OCI-LY7 (cell line): ENCODE measurements at regions of chr15 and their contacts with region 1.

Region 1: DNA sequence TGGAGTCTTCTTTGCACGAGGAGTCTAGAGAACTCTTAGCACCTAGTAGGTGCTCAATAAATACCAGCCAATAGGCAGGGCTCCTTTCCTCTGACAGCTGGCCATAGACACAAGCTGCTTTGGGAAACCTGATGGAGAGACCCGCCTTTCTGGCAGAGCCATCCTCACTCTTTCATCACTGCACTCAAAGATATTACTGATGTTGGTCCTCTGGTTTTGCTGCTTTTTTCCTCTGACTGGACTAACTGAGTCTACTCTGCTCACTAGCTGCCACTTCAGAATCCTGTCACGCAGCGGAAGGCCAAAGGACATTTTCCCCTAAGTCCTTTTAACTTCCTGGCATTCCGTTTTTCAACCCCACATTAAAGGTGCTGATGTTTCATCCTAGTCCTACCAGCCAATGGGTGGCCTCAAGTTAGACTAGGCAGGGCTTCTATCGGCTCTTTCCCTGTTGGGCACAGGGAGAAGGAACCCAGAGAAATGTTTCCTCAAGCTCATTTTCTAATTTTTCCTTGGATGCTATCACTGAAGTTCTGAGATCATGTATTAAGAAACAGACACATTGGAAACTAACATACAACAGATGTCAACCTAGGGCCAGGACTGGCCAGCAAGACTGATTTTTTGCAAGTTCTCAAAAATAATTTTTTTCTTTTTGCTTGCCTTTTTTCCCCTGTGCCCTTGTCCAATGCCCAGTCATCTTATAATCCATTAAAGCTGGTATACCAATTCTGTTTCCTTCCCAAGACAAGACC is 132.8 kb upstream of the ICE2 start:
- DNase-seq: no peak
- H3K4me3 ChIP-seq: no peak overlapping the region
- H3K27ac ChIP-seq: no peak overlapping the region
- H3K4me1 ChIP-seq: no peaks in the 10 kb centered on the region
- CTCF ChIP-seq: no peak

Region 2: GRCh38 chr15:60830479-60830878 is 218.7 kb after region 1 on chr15:
- CTCF ChIA-PET with region 1: no interaction called
- POLR2A ChIA-PET with region 1: interaction called, 10 read pairs
- intact Hi-C with region 1: no loop called
- DNase-seq: no peak
- H3K4me3 ChIP-seq: no peak overlapping the region
- H3K27ac ChIP-seq: no peak overlapping the region
- H3K4me1 ChIP-seq: no peaks in the 10 kb centered on the region
- CTCF ChIP-seq: no peak